Heart right ventricle (tissue), 16 donors: ENCODE measurements at regions of chr5 and their contacts with region 1.

Region 1: DNA sequence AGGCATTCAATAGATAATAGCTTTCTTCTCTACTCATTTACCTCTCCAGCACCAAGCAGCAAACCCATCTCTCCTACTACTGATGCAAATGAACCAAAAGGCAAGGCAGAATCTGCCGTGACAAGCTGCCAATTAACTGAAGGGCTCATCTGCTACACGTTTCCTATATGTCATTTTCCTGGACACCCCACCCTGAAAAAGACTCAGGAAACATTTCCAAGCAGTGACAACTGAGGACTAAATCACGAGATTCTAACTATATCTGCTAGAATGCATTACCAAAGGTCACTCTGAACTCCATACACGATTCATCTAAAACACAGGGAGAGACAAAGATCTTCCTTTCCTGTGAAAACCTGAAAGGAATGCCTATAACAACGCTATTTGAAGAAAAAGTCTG is 12.9 kb downstream of the PLPP1 start:
- DNase-seq: no peak
- ATAC-seq: peak in 4 of 8 donors; percentile 16 to 69 (median 40)
- H3K4me3 ChIP-seq: no peak overlapping the region
- H3K27ac ChIP-seq: peak overlapping the region in 2 of 10 donors; percentile 36 to 54
- H3K4me1 ChIP-seq: peaks cover 0 to 91% (median 51%) of the 10 kb centered on the region in 9 donors
- H3K27me3 ChIP-seq: no peaks in the 10 kb centered on the region
- CTCF ChIP-seq: no peak

Region 2: GRCh38 chr5:55320571-55320970 is 201.3 kb before region 1 on chr5:
- intact Hi-C with region 1: no loop called
- DNase-seq: no peak
- ATAC-seq: no peak
- H3K4me3 ChIP-seq: no peak overlapping the region
- H3K27ac ChIP-seq: no peak overlapping the region
- H3K4me1 ChIP-seq: peaks cover 0 to 27% (median 10%) of the 10 kb centered on the region in 9 donors
- H3K27me3 ChIP-seq: no peaks in the 10 kb centered on the region
- CTCF ChIP-seq: no peak

Region 3: GRCh38 chr5:55421074-55421529 is 100.8 kb before region 1 on chr5:
- intact Hi-C with region 1: loop called in 1 of 10 experiments (anchors 10 kb)
- DNase-seq: no peak
- ATAC-seq: no peak
- H3K4me3 ChIP-seq: no peak overlapping the region
- H3K27ac ChIP-seq: peak overlapping the region in 3 of 10 donors; percentile 8 to 51 (median 36)
- H3K4me1 ChIP-seq: peaks cover 3 to 52% (median 29%) of the 10 kb centered on the region in 9 donors
- H3K27me3 ChIP-seq: no peaks in the 10 kb centered on the region
- CTCF ChIP-seq: no peak

Region 4: DNA sequence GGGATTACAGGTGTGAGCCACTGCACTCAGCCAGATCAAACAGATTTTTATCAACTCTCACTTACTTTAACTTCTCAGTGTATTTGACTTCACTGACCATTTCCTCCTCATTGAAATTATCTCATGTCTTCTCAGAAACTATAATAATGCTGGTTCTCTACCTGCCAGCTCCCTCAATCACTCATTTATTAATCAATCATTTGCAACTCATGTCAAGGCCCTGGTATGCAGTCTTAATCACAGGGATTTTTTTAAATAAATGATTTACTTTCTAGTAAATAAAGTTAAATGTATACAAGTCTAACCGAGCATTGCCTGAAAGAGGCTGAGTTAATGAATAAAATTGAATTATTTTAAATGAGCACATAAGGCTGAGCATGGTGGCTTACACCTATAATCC is 50.4 kb before region 1 on chr5:
- intact Hi-C with region 1: loop called in 1 of 10 experiments (anchors 10 kb)
- DNase-seq: no peak
- ATAC-seq: no peak
- H3K4me3 ChIP-seq: no peak overlapping the region
- H3K27ac ChIP-seq: no peak overlapping the region
- H3K4me1 ChIP-seq: peaks cover 3 to 43% (median 34%) of the 10 kb centered on the region in 9 donors
- H3K27me3 ChIP-seq: no peaks in the 10 kb centered on the region
- CTCF ChIP-seq: no peak